ENCODE measurements at regions of chr11 and their contacts with region 1.

Region 1: GRCh38 chr11:9972989-9973388 is 309.1 kb downstream of the SWAP70 start:
- DNase-seq: peak; percentile 13
- H3K4me3 Mint-ChIP-seq: no peak overlapping the region
- H3K27ac Mint-ChIP-seq: no peak overlapping the region
- H3K4me1 Mint-ChIP-seq: no peaks in the 10 kb centered on the region
- H3K27me3 Mint-ChIP-seq: no peaks in the 10 kb centered on the region
- CTCF ChIP-seq: no peak

Region 2: DNA sequence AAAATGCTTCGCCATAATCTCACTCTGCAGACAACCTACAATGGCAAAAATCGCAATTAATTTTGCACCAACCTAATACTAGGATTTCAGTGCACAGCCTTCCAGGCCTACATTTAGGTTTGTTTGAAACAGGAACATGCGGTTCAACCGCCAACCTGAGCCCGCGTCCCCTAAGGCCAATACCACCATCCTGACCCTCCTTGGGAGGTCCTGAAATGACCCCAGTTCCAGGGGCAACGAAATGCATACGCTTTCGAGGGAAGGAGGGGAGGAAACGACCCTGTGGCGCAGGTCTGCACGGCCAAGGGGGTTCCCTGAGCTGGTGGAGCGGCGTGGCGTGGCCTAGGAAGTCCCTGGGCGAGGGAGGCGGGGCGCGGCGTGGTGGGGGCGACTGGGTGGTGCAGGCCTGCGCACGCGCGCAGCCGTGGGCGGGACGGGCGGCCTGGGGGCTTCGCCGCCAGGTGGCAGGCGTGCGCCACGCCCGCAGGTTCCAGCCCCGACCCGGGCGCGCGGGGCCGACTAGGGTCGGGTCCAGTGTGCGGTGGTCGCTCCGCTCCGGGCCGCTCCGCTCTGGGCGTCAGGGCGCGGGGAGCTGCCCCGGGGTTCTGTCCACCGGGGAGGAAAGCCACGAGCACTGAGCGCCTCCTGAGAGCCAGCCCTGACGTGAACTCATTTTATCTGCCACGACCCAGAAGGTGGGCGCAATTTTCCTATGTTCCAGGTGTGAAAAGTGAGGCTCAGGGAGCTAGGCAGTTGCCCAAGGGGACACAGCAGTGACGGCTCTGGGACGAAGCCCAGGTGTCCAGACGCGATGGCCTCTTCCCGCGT is 215.0 kb before region 1 on chr11:
- CTCF ChIA-PET with region 1: interaction called, 5 read pairs
- intact Hi-C with region 1: loop called (anchors 2 kb)
- DNase-seq: peak; percentile 87
- H3K4me3 Mint-ChIP-seq: peak overlapping the region; percentile 81
- H3K27ac Mint-ChIP-seq: peak overlapping the region; percentile 95
- H3K4me1 Mint-ChIP-seq: peaks cover 21% of the 10 kb centered on the region
- H3K27me3 Mint-ChIP-seq: no peaks in the 10 kb centered on the region
- CTCF ChIP-seq: peak; percentile 88

Region 3: GRCh38 chr11:9861860-9862725 is 110.9 kb before region 1 on chr11:
- CTCF ChIA-PET with region 1: no interaction called
- intact Hi-C with region 1: loop called (anchors 1 kb)
- DNase-seq: peak; percentile 61
- H3K4me3 Mint-ChIP-seq: no peak overlapping the region
- H3K27ac Mint-ChIP-seq: no peak overlapping the region
- H3K4me1 Mint-ChIP-seq: peaks cover 8% of the 10 kb centered on the region
- H3K27me3 Mint-ChIP-seq: no peaks in the 10 kb centered on the region
- CTCF ChIP-seq: peak; percentile 68